ENCODE measurements at regions of chr15 and their contacts with region 1.

Region 1: GRCh38 chr15:72796515-72797337 is 13.2 kb upstream of the ADPGK start:
- DNase-seq: peak; percentile 15
- ATAC-seq: peak; percentile 95
- H3K4me3 ChIP-seq: peak overlapping the region; percentile 46 to 64
- H3K27ac ChIP-seq: no peak overlapping the region; the same call in 1 of the 2 replicates
- H3K4me1 ChIP-seq: peaks cover 0 to 10% of the 10 kb centered on the region in 2 experiments; a peak in 1 of 4 replicates
- H3K27me3 ChIP-seq: peaks cover 6% of the 10 kb centered on the region; the same call in 1 of the 2 replicates
- CTCF ChIP-seq: peak; percentile 24 to 54 (median 37); a peak in 3 of 6 replicates
- POLR2A ChIP-seq: no peak
- RAD21 ChIP-seq: peak; percentile 52

Region 2: GRCh38 chr15:73081321-73081958 is 284.7 kb after region 1 on chr15:
- CTCF ChIA-PET with region 1: no interaction called
- POLR2A ChIA-PET with region 1: no interaction called
- RAD21 ChIA-PET with region 1: interaction called in 1 of 2 experiments, 3 read pairs
- intact Hi-C with region 1: loop called (anchors 1 kb)
- DNase-seq: peak; percentile 54
- ATAC-seq: peak; percentile 58
- H3K4me3 ChIP-seq: no peak overlapping the region
- H3K27ac ChIP-seq: no peak overlapping the region
- H3K4me1 ChIP-seq: no peaks in the 10 kb centered on the region
- H3K27me3 ChIP-seq: no peaks in the 10 kb centered on the region
- CTCF ChIP-seq: peak; percentile 49 to 79 (median 69); a peak in 5 of 6 replicates
- POLR2A ChIP-seq: no peak
- RAD21 ChIP-seq: peak; percentile 86

Measured in HCT116 (cell line).